ENCODE measurements at regions of chr18 and their contacts with region 1.

Region 1: DNA sequence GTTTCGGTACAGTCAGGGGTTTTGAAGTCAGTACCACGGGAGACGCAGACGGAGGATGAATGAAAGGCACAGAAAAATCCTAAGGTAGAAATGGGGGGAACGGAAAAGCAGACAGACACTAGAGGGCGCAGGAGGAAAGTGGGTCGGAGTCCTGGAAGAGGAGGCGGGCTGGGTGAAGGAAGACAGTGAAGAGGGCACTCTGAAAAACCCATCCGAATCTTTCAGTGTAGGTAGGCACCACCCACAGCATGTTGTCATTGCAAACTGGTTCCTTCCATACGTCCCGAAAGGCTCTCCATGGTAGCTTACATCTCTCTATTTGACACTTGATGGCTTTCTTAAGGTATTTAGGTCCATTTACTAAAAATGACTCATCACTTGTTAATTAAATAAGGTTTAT is 18.5 kb upstream of the ZNF236 start:
- DNase-seq: peak; percentile 85
- H3K4me3 Mint-ChIP-seq: no peak overlapping the region
- H3K27ac Mint-ChIP-seq: no peak overlapping the region
- H3K4me1 Mint-ChIP-seq: peaks cover 11% of the 10 kb centered on the region
- H3K27me3 Mint-ChIP-seq: peaks cover 7% of the 10 kb centered on the region

Region 2: DNA sequence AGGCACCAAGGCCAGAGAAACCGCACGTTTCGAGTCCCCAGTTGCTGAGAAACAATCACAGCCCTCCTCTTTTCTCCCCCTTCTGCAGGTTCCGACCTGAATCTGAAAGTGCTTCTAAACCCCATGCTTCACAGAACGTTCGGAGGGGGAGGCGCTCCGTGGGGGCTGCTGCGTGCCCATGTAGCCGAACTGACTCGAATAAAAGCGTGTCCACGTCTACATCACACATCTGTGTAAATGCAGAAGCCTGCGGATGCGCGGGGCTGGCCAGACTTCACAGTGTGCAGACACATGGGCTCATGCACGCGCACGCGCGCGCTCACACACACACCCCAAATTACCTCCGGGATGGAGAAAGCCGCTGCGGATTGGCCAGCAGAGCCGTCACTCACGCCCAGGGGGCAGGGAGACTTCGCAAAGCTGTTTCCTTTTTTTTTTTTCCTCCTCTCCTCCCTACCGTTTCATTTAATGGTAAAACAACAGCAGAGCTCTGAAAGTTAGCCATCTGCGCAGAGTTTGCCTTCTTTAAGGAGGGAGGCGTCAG is 311.1 kb before region 1 on chr18:
- CTCF ChIA-PET with region 1: no interaction called
- POLR2A ChIA-PET with region 1: no interaction called
- intact Hi-C with region 1: loop called (anchors 10 kb)
- DNase-seq: peak; percentile 99
- H3K4me3 Mint-ChIP-seq: peak overlapping the region; percentile 84
- H3K27ac Mint-ChIP-seq: peak overlapping the region; percentile 42
- H3K4me1 Mint-ChIP-seq: peaks cover 33% of the 10 kb centered on the region
- H3K27me3 Mint-ChIP-seq: peaks cover 60% of the 10 kb centered on the region

Region 3: GRCh38 chr18:76822510-76823160 is 18.8 kb after region 1 on chr18 and contains the start of gene ZNF236:
- CTCF ChIA-PET with region 1: interaction called, 53 read pairs
- POLR2A ChIA-PET with region 1: interaction called, 4 read pairs
- intact Hi-C with region 1: loop called (anchors 2 kb)
- DNase-seq: peak; percentile 72
- H3K4me3 Mint-ChIP-seq: peak within 1 kb of the TSS; percentile 89
- H3K27ac Mint-ChIP-seq: peak within 1 kb of the TSS; percentile 87
- H3K4me1 Mint-ChIP-seq: peaks cover 51% of the 10 kb centered on the region
- H3K27me3 Mint-ChIP-seq: no peaks in the 10 kb centered on the region
- total RNA-seq, gene ZNF236: 14.4 to 15.6 TPM

Region 4: DNA sequence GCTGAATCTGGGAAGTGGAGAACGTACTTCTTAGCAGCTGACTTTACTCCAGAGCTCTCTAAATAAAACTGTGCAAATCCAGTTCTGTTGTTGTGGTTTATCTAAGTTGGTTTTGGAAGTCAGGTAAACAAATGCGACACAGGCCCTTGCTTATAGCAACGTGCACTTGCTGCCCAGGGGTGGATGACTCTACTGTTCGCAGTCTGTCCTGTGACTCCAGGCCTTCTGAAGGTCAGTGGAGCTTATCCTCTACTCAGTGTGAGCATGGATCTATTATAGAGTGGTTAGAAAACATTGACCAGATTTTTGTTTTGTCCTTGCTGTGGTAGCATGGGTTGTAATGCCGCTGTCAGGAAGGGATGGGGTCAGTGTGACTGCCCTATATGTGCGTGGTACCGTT is 107.6 kb after region 1 on chr18:
- CTCF ChIA-PET with region 1: interaction called, 12 read pairs
- POLR2A ChIA-PET with region 1: no interaction called
- intact Hi-C with region 1: no loop called
- DNase-seq: no peak
- H3K4me3 Mint-ChIP-seq: no peak overlapping the region
- H3K27ac Mint-ChIP-seq: no peak overlapping the region
- H3K4me1 Mint-ChIP-seq: no peaks in the 10 kb centered on the region
- H3K27me3 Mint-ChIP-seq: no peaks in the 10 kb centered on the region

Region 5: DNA sequence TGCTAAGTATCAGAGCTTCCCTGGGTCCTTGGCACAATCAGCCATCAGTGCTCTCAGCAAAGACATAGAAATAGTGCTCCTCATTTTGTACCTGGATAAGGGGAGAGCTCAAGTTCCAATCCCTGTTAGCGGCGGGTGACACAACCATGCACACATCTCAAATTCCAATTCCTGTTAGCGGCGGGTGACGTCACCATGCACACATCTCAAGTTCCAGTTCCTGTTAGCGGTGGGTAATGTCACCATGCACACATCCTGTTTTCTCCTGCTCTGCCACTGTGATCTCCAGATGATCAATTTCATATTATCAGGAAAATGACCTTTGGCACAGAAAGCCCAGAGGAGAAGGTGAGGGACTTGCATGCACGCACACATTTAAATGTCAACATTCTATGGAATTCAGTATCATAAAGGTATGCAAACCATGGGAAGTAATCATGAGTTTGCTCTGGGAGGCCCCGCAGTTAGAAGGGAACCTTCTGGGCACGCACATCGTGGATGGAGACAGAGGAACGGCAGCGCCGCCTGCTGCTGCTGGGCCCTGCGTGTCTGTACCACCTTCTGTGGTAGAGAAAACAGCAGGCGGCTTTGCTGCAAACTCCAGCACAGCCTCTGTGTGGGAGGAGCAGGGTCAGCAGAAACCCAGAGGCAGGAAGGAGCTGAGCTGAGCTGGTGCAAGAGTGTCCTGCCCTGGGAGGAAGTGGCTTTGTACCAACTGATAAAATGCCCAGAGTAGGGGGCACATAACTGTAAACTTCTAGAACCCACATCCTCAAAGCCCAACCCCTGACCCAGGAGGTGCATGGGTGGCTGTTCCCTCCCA is 251.0 kb after region 1 on chr18:
- CTCF ChIA-PET with region 1: interaction called, 10 read pairs
- POLR2A ChIA-PET with region 1: no interaction called
- intact Hi-C with region 1: no loop called
- DNase-seq: peak; percentile 90
- H3K4me3 Mint-ChIP-seq: peak overlapping the region; percentile 81
- H3K27ac Mint-ChIP-seq: peak overlapping the region; percentile 96
- H3K4me1 Mint-ChIP-seq: peaks cover 72% of the 10 kb centered on the region
- H3K27me3 Mint-ChIP-seq: no peaks in the 10 kb centered on the region

Region 6: GRCh38 chr18:77650799-77651385 is 847.1 kb after region 1 on chr18:
- CTCF ChIA-PET with region 1: interaction called, 4 read pairs
- POLR2A ChIA-PET with region 1: no interaction called
- intact Hi-C with region 1: loop called (anchors 2 kb)
- DNase-seq: peak; percentile 75
- H3K4me3 Mint-ChIP-seq: no peak overlapping the region
- H3K27ac Mint-ChIP-seq: no peak overlapping the region
- H3K4me1 Mint-ChIP-seq: no peaks in the 10 kb centered on the region
- H3K27me3 Mint-ChIP-seq: peaks cover 9% of the 10 kb centered on the region